ENCODE measurements at regions of chr5 and their contacts with region 1.

Region 1: DNA sequence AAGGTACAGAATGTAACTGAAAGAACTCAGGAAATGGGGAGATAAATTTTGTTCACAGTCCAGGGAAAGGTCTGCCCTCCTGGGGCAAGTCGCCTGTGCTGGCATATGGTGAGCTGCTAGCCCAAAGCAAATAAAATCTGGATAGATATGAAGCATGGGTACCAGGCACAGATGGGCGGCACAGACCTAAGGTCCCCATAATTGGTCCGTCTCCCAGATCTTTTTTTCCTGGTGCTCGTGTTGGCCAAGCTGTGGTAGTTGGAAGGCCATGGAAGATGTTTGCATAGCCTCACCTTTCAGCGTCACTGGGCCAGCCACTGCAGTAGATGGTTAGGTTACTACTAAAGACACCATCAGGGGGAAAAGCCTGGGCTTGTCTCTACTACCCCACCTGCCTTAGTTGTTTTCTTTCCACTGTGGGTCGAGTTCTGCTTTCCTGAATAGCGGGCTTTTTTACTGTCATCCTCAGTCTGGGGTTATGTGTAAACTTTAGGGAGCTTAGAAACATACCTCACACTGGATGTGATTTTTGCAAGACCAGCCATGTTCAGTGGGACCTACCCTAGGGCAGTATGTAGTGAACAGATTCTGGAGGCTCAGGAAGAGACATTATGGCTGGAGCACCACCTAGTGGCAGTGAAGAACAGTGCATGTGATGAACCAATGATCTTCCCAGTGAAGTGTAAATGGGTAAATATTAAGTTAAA is 24.2 kb upstream of the GLRX start:
- DNase-seq: no peak

Region 2: DNA sequence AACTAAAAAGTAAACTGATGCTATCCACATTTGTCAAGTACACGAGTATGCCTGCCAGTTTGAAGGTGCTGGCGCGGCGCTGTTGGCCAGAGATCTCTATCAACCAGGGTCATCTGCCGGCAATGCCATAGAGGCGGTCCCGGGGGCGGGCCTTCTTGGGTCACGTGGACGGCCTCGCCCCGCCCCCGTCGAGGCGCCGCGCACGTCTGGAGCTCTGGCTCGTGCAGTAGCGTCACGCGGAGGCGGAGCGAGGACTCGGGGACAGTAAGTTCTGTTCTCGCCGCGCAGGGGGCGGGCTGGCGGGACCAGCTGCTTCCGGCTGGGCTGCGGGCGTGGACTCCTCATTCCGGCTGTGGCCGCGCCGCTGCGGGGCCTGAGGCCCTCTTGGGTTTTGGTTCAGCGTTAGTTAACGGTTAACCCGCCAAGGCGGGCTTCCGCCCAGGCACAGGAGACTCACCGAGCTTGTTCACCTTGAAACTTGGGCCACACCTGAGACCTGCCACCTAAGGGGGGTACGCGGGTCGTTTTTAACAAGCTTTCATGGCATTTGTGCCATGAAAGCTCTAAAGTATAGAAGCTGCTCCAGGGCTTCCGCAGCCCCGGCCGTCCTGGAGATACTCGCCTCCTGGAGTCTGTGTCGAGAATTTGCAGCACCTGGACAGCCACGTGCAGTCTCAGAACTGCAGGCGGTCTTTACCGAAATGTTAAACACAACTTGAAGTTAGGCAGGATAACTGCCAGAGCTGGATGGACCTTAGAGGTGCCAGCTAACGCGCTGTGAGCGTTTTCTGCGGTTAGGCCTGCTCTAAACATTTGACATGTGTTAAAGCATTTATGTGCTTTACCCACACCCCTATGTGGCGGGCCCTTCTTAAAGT is 199.9 kb before region 1 on chr5 and contains the start of gene RFESD:
- intact Hi-C with region 1: loop called (anchors 10 kb)
- DNase-seq: peak; percentile 100
- total RNA-seq, gene RFESD: 1.1 to 2.0 TPM

Region 3: DNA sequence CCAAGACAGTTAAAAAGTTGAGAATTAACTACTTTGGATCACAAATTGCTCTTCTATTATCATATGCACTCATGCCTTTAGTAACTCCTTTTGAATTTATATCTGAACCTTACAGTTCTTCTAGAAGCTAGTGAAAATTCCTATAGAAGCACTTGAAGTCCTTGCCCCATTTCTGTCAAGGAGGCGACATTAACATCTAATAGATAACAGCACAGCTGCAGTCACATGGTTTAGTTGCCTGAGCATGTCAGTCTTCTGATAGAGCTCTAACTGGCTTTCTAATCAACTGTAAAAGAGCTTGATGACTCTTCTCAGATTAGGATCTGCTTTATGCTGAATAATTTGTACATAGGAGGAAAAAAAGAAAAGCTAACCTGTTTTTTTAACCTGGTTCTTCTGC is 191.1 kb before region 1 on chr5:
- intact Hi-C with region 1: loop called (anchors 5 to 10 kb)
- DNase-seq: no peak

Region 4: DNA sequence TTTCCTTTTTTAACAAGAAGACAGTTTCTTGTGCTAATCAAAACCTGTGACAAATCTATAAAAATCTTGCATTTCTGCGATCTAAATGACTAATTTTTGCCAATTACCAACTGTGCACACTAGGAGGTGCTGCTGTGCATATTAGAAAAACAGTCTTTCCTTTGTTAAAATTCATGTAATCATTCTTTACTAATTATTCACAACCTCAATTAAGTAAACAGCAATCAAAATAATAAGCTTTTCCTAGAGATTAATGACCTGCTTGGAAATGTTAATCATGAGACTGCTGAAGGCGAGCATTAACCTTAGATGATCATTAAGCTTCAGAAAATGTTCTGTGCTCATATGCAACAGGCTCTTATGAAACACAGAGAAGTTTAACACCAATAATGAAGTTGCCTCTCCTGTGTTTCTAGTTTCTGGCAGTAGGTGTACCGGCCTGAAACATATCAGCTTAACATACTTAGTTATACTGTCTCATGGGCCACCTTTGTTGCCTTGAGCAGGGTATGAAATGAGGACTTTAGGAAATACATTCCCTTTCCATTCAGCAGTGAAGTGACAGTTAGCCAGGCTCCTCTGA is 182.4 kb before region 1 on chr5:
- intact Hi-C with region 1: loop called (anchors 5 to 10 kb)
- DNase-seq: no peak

Region 5: GRCh38 chr5:95781101-95781583 is 65.6 kb before region 1 on chr5:
- intact Hi-C with region 1: loop called (anchors 1 to 2 kb)
- DNase-seq: peak; percentile 89

Measured in posterior vena cava (tissue), 2 donors.